IMR-90 (cell line): ENCODE measurements at regions of chr1 and their contacts with region 1.

Region 1: DNA sequence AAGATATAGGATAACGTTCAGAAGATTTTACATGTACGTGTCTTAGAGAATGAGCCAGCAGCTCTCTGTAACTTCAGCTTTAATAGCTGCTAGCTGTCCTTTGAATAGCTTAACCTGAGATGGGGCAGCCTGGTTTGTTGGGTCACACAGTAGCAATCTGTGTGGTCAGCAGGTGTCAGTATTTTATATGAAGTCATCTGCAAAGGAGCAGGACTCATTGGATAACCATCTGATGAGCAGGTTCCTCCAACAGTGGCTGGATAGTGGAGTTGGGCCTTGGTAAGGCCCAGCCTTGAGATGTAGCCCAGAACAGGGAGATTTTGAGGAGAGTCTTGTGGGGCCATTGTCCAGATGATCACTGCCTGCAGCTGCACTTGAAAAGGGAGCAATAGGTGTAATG is 6.4 kb downstream of the GSTM5 start:
- DNase-seq: peak; percentile 27
- ATAC-seq: no peak
- H3K4me3 ChIP-seq: no peak overlapping the region
- H3K27ac ChIP-seq: peak overlapping the region; percentile 33; the same call in 1 of the 2 replicates
- H3K4me1 ChIP-seq: peaks cover 8% of the 10 kb centered on the region; the same call in 1 of the 2 replicates
- H3K27me3 ChIP-seq: no peaks in the 10 kb centered on the region; the same call in 1 of the 2 replicates
- CTCF ChIP-seq: no peak
- POLR2A ChIP-seq: no peak
- RAD21 ChIP-seq: no peak

Region 2: GRCh38 chr1:109229531-109230127 is 488.9 kb before region 1 on chr1:
- CTCF ChIA-PET with region 1: no interaction called
- POLR2A ChIA-PET with region 1: no interaction called
- dilution Hi-C with region 1: no loop called
- in situ Hi-C with region 1: no loop called
- intact Hi-C with region 1: no loop called
- DNase-seq: no peak
- ATAC-seq: no peak
- H3K4me3 ChIP-seq: no peak overlapping the region
- H3K27ac ChIP-seq: no peak overlapping the region; the same call in 1 of the 2 replicates
- H3K4me1 ChIP-seq: peaks cover 17% of the 10 kb centered on the region
- H3K27me3 ChIP-seq: no peaks in the 10 kb centered on the region
- CTCF ChIP-seq: no peak
- POLR2A ChIP-seq: no peak
- RAD21 ChIP-seq: no peak

Region 3: GRCh38 chr1:109630081-109630897 is 88.2 kb before region 1 on chr1:
- CTCF ChIA-PET with region 1: no interaction called
- POLR2A ChIA-PET with region 1: no interaction called
- dilution Hi-C with region 1: no loop called
- in situ Hi-C with region 1: no loop called
- intact Hi-C with region 1: no loop called
- DNase-seq: no peak
- ATAC-seq: no peak
- H3K4me3 ChIP-seq: no peak overlapping the region
- H3K27ac ChIP-seq: no peak overlapping the region
- H3K4me1 ChIP-seq: peaks cover 1% of the 10 kb centered on the region; the same call in 1 of the 2 replicates
- H3K27me3 ChIP-seq: no peaks in the 10 kb centered on the region
- CTCF ChIP-seq: no peak
- POLR2A ChIP-seq: no peak
- RAD21 ChIP-seq: 0 out of 2 replicates have a peak, but pooled peaks have one; percentile 23

Region 4: DNA sequence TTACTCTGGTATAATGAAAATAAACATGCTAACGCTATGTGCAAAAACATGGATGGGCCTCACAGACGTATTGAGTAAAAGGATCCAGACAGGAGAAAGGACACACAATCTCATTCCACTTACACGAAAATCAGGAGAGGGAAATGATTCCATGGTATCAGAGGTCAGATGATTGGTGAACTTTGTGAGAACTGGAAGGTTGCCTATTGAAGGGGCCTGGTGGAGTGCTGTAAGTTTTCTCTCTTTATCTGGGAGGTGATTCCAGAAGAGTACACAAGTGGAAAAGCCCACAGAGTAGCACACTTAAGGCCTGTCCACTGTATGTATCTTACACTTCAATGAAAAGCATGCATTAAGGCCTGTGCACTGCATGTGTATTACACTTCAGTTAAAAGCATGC is 41.0 kb before region 1 on chr1:
- CTCF ChIA-PET with region 1: no interaction called
- POLR2A ChIA-PET with region 1: no interaction called
- dilution Hi-C with region 1: no loop called
- in situ Hi-C with region 1: no loop called
- intact Hi-C with region 1: loop called (anchors 5 kb)
- DNase-seq: peak; percentile 0
- ATAC-seq: no peak
- H3K4me3 ChIP-seq: no peak overlapping the region
- H3K27ac ChIP-seq: no peak overlapping the region
- H3K4me1 ChIP-seq: peaks cover 2% of the 10 kb centered on the region; the same call in 1 of the 2 replicates
- H3K27me3 ChIP-seq: no peaks in the 10 kb centered on the region
- CTCF ChIP-seq: no peak
- POLR2A ChIP-seq: no peak
- RAD21 ChIP-seq: no peak

Region 5: GRCh38 chr1:109739738-109740660 is 21.5 kb after region 1 on chr1:
- CTCF ChIA-PET with region 1: no interaction called
- POLR2A ChIA-PET with region 1: no interaction called
- dilution Hi-C with region 1: no loop called
- in situ Hi-C with region 1: no loop called
- intact Hi-C with region 1: loop called (anchors 1 kb)
- DNase-seq: peak; percentile 55
- ATAC-seq: peak; percentile 99
- H3K4me3 ChIP-seq: peak overlapping the region; percentile 59
- H3K27ac ChIP-seq: peak overlapping the region; percentile 38
- H3K4me1 ChIP-seq: no peaks in the 10 kb centered on the region
- H3K27me3 ChIP-seq: peaks cover 8% of the 10 kb centered on the region
- CTCF ChIP-seq: no peak
- POLR2A ChIP-seq: peak; percentile 90
- RAD21 ChIP-seq: no peak